Thyroid gland (tissue), 4 donors: ENCODE measurements at regions of chr1 and their contacts with region 1.

Region 1: DNA sequence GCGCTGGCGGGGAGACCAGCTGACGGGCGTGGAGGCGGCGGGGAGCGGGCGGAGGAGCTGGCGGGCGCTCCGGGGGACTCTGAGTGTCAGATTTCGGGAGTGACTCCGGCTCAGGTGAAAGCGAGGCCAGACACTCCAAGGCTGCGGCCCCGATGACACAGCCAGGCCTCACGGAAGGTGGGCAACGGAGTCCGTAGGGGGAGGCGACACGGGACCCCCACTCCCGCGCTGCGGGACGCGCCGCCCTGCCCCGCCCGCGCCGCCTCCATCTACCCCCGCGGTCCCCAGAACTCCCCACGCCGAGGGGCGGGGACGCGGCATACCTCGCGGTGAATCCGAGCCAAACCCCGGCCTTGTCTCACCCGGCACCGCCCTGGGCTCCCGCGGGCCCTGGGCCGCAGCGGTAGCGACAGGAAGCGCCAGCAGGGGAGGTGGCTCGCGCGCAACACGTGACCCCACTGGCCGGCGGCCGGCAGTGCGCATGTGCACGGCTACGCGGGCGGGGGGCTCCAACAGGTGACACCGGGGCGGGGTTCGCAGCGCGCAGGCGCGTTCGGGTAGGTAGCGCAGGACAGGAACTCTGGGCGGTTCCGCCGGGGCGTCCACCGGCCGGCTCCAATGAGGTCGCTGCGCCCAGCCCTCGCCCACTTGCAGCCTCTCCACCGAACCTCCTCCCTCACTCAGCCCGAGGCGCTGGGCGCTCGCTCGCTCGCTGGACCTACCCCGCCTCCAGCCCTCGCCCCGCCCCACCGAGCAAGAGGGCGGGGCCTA is at the start of gene CC2D1B:
- DNase-seq: peak; percentile 100
- H3K4me3 ChIP-seq: peak within 1 kb of the TSS; percentile 59 to 98 (median 90)
- H3K27ac ChIP-seq: peak within 1 kb of the TSS; percentile 87 to 94 (median 88)
- H3K4me1 ChIP-seq: peaks cover 12 to 13% of the 10 kb centered on the region in 2 donors
- H3K27me3 ChIP-seq: no peaks in the 10 kb centered on the region
- CTCF ChIP-seq: peak in 3 of 6 experiments; percentile 29 to 59 (median 33)
- POLR2A ChIP-seq: peak; percentile 71 to 93
- total RNA-seq, gene CC2D1B: 34.7 to 68.2 (median 48.4) TPM

Region 2: GRCh38 chr1:51019811-51020210 is 1346.1 kb before region 1 on chr1:
- intact Hi-C with region 1: no loop called
- DNase-seq: no peak
- H3K4me3 ChIP-seq: no peak overlapping the region
- H3K27ac ChIP-seq: no peak overlapping the region
- H3K4me1 ChIP-seq: no peaks in the 10 kb centered on the region
- H3K27me3 ChIP-seq: no peaks in the 10 kb centered on the region
- CTCF ChIP-seq: no peak
- POLR2A ChIP-seq: no peak

Region 3: GRCh38 chr1:52056163-52056936 is 309.6 kb before region 1 on chr1 and contains the start of gene BTF3L4:
- intact Hi-C with region 1: loop called (anchors 10 kb)
- DNase-seq: peak; percentile 98
- H3K4me3 ChIP-seq: peak within 1 kb of the TSS; percentile 79 to 96 (median 79)
- H3K27ac ChIP-seq: peak within 1 kb of the TSS; percentile 74 to 96 (median 80)
- H3K4me1 ChIP-seq: peaks cover 25 to 30% of the 10 kb centered on the region in 2 donors
- H3K27me3 ChIP-seq: no peaks in the 10 kb centered on the region
- CTCF ChIP-seq: no peak
- POLR2A ChIP-seq: peak in 1 of 2 donors; percentile 82
- total RNA-seq, gene BTF3L4: 40.5 to 69.7 (median 54.5) TPM